Ovary (tissue), 10 donors: ENCODE measurements at regions of chr7 and their contacts with region 1.

Region 1: DNA sequence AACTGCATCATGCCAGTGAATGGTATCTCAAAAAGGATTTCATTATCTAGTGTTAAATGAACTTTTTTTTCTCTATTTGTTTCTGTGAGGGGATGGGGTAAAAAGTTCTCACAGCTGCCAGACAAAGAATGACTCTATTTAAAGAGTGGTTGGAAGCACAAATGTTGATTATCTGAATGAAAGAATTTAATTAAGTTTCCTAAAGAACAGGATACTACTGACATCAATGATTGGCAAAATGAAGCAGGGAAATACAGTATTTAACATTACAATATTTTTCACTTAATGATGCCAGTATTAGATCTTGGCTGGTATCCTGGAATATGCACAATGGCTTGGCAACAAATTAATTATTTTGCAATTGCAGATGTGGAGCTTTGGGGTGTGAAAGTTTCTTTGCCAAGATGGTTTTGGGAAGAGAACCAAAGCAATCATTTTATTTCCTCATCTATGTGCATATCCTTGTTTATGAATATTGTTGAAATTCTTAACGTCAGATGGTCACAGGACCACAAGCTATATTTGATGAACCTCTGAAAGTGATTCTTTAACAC is 336.8 kb downstream of the ARL4A start:
- DNase-seq: no peak
- H3K4me3 ChIP-seq: no peak overlapping the region
- H3K27ac ChIP-seq: no peak overlapping the region
- H3K4me1 ChIP-seq: no peaks in the 10 kb centered on the region
- H3K27me3 ChIP-seq: no peaks in the 10 kb centered on the region
- CTCF ChIP-seq: no peak
- EP300 ChIP-seq: no peak
- POLR2A ChIP-seq: no peak

Region 2: DNA sequence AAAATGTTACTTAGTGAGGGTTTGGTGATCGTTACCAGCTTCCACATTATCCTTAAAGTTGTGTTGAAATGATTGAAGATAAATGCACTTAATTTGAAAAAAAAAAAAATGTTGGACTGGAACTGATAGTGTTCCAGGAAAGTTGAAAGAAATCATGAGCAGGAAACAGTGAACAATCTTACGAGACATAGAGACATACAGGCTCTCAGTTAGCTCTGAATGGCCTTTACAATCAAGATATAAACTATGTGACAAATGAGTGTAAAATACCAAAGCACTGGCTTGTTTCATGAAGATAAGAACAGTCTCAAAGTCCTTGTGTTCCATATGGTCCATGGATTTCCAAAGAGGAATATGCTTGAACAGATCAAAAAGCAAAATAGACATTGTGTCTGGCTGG is 1395.3 kb after region 1 on chr7:
- intact Hi-C with region 1: loop called in 1 of 4 experiments (anchors 5 kb)
- DNase-seq: no peak
- H3K4me3 ChIP-seq: no peak overlapping the region
- H3K27ac ChIP-seq: no peak overlapping the region
- H3K4me1 ChIP-seq: no peaks in the 10 kb centered on the region
- H3K27me3 ChIP-seq: no peaks in the 10 kb centered on the region
- CTCF ChIP-seq: no peak
- EP300 ChIP-seq: no peak
- POLR2A ChIP-seq: no peak